ENCODE measurements at regions of chr11 and their contacts with region 1.

Region 1: GRCh38 chr11:96342961-96343711 is at the start of gene MAML2:
- DNase-seq: peak; percentile 91 to 96 (median 95)
- H3K4me3 ChIP-seq: peak within 1 kb of the TSS; percentile 26 to 98 (median 87)
- H3K27ac ChIP-seq: peak within 1 kb of the TSS; percentile 53 to 67
- H3K4me1 ChIP-seq: peaks cover 26 to 47% (median 44%) of the 10 kb centered on the region in 4 experiments
- H3K27me3 ChIP-seq: no peaks in the 10 kb centered on the region

Region 2: GRCh38 chr11:95835768-95836488 is 507.2 kb before region 1 on chr11:
- CTCF ChIA-PET with region 1: interaction called, 18 read pairs
- POLR2A ChIA-PET with region 1: no interaction called
- DNase-seq: peak; percentile 60 to 77 (median 74)
- H3K4me3 ChIP-seq: no peak overlapping the region
- H3K27ac ChIP-seq: no peak overlapping the region
- H3K4me1 ChIP-seq: no peaks in the 10 kb centered on the region
- H3K27me3 ChIP-seq: no peaks in the 10 kb centered on the region

Region 3: DNA sequence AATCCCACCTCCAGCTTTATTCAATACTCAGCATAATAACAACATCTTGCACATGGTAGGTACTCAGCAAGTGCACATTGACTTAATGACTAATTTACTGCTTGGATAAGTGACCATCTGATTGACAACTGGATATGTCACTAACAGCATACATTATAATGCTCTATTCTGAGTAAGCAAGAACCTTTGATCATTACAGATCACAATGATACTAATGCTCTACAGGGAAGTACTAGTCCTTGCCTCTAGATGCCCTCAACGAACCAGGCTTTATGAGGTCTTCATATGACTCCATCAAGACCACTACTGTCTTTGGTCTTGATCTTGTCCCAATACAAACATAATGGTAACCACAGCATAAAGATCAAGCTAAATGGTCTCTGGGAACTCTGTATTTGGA is 251.7 kb before region 1 on chr11:
- CTCF ChIA-PET with region 1: interaction called, 20 read pairs
- POLR2A ChIA-PET with region 1: no interaction called
- DNase-seq: peak; percentile 45 to 71 (median 68)
- H3K4me3 ChIP-seq: no peak overlapping the region
- H3K27ac ChIP-seq: no peak overlapping the region
- H3K4me1 ChIP-seq: peaks cover 0 to 4% (median 0%) of the 10 kb centered on the region in 4 experiments
- H3K27me3 ChIP-seq: no peaks in the 10 kb centered on the region

Region 4: GRCh38 chr11:96237766-96238266 is 105.3 kb before region 1 on chr11:
- CTCF ChIA-PET with region 1: interaction called, 14 read pairs
- POLR2A ChIA-PET with region 1: no interaction called
- DNase-seq: no peak
- H3K4me3 ChIP-seq: no peak overlapping the region
- H3K27ac ChIP-seq: no peak overlapping the region
- H3K4me1 ChIP-seq: peaks cover 13 to 21% (median 19%) of the 10 kb centered on the region in 4 experiments
- H3K27me3 ChIP-seq: no peaks in the 10 kb centered on the region

Region 5: GRCh38 chr11:96279018-96279895 is 63.9 kb before region 1 on chr11:
- CTCF ChIA-PET with region 1: interaction called, 37 read pairs
- POLR2A ChIA-PET with region 1: no interaction called
- DNase-seq: no peak
- H3K4me3 ChIP-seq: no peak overlapping the region
- H3K27ac ChIP-seq: peak overlapping the region in 1 of 2 experiments; percentile 27
- H3K4me1 ChIP-seq: peaks cover 0 to 10% (median 2%) of the 10 kb centered on the region in 4 experiments
- H3K27me3 ChIP-seq: no peaks in the 10 kb centered on the region

Region 6: DNA sequence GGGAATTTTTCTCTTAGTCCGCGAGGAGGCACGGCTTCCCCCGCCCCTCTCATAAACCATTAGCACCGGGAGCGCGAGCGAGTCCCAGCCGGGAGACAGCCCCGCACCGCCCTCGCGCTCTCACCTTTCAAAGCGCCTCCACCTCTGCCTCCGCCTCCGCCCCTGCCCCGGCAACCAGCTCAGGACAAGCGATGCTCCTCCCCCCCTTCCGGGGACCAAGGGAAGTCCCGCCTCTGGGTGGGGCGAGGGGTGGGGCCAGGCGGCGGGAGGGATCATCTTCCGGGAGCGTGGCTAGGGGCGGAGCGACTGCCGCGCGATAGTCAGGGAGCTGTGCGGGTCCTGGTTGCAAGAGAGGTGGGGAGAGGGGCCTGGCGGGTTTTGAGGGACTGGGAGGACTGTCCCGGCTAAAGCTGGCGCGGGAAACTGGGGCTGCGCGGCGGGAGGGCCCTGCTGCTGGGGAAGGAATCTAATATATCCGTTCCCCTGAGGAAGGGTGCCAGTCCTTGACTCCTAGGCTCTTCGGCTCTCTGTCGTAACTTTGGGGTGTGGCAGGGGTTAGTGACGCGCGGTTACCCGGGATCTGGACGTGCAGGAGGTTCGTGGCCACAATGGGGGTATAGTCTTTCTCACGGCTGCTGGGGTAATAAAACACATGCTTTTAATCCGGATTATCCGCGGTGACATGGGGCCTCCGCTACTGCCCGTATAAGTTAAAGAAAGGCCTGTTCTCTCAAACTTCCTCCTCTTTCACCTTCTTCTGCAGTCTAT is 46.8 kb after region 1 on chr11 and contains the starts of genes CCDC82 and JRKL:
- CTCF ChIA-PET with region 1: interaction called, 23 read pairs
- POLR2A ChIA-PET with region 1: no interaction called
- DNase-seq: peak; percentile 93 to 96 (median 96)
- H3K4me3 ChIP-seq: peak within 1 kb of the TSS; percentile 81 to 99 (median 94)
- H3K27ac ChIP-seq: peak within 1 kb of the TSS; percentile 82 to 92
- H3K4me1 ChIP-seq: peaks cover 12 to 19% (median 18%) of the 10 kb centered on the region in 4 experiments
- H3K27me3 ChIP-seq: no peaks in the 10 kb centered on the region

Region 7: GRCh38 chr11:96472085-96472484 is 128.9 kb after region 1 on chr11:
- CTCF ChIA-PET with region 1: no interaction called
- POLR2A ChIA-PET with region 1: no interaction called
- DNase-seq: no peak
- H3K4me3 ChIP-seq: no peak overlapping the region
- H3K27ac ChIP-seq: no peak overlapping the region
- H3K4me1 ChIP-seq: no peaks in the 10 kb centered on the region
- H3K27me3 ChIP-seq: no peaks in the 10 kb centered on the region